Activated CD4-positive, alpha-beta memory T cell treated with anti-CD3 and anti-CD28 coated beads for 36 hours (primary cell): ENCODE measurements at regions of chr10 and their contacts with region 1.

Region 1: DNA sequence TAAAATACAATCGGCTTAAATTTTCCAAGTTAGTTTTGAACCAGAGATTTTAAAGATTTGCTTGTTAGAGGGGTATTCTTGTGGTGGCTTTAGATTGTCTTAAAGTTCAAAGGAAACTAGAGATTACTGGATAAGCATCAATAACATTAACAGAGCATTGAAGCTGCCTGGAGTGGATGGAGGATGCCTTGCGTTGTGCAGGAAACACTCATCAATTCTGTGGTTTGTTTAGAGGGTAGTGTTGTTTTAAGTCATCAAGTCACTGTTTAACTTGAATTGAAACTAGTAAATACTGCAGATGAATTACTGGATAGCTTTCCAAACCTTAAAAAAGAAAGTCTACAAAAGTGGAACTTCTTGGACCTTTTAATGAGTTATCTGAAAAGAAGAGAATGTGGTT is 218.6 kb downstream of the CELF2 start:
- DNase-seq: peak; percentile 61
- H3K4me3 Mint-ChIP-seq: peak overlapping the region; percentile 66
- H3K27ac Mint-ChIP-seq: peak overlapping the region; percentile 93
- H3K4me1 Mint-ChIP-seq: peaks cover 97% of the 10 kb centered on the region
- H3K27me3 Mint-ChIP-seq: no peaks in the 10 kb centered on the region

Region 2: DNA sequence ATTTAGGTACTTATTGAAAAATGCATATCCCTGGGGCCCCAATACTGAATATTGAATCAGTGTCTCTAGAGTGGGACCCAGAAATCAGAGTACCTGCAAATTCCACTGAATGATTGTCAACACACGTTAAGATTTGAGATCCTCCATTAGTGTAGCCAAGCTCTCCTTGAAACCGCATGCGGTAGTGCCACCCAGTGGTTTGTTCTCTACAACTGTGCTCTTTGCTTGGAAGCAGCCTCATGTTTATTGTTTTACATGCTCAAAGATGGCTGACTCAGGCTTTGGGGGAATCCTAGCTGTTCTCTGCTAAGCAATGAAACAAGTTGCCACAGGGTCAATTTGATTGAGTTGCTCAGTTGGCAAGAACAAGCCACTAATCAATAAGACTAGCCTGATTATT is 558.8 kb before region 1 on chr10:
- CTCF ChIA-PET with region 1: no interaction called
- POLR2A ChIA-PET with region 1: no interaction called
- intact Hi-C with region 1: no loop called
- DNase-seq: peak; percentile 64
- H3K4me3 Mint-ChIP-seq: no peak overlapping the region
- H3K27ac Mint-ChIP-seq: no peak overlapping the region
- H3K4me1 Mint-ChIP-seq: no peaks in the 10 kb centered on the region
- H3K27me3 Mint-ChIP-seq: peaks cover 3% of the 10 kb centered on the region

Region 3: GRCh38 chr10:11197266-11197712 is 38.9 kb before region 1 on chr10:
- CTCF ChIA-PET with region 1: interaction called, 3 read pairs
- POLR2A ChIA-PET with region 1: interaction called, 10 read pairs
- intact Hi-C with region 1: no loop called
- DNase-seq: no peak
- H3K4me3 Mint-ChIP-seq: no peak overlapping the region
- H3K27ac Mint-ChIP-seq: peak overlapping the region; percentile 55
- H3K4me1 Mint-ChIP-seq: peaks cover 97% of the 10 kb centered on the region
- H3K27me3 Mint-ChIP-seq: no peaks in the 10 kb centered on the region

Region 4: GRCh38 chr10:11209830-11210181 is 26.4 kb before region 1 on chr10:
- CTCF ChIA-PET with region 1: interaction called, 5 read pairs
- POLR2A ChIA-PET with region 1: interaction called, 17 read pairs
- intact Hi-C with region 1: loop called (anchors 1 kb)
- DNase-seq: no peak
- H3K4me3 Mint-ChIP-seq: peak overlapping the region; percentile 65
- H3K27ac Mint-ChIP-seq: peak overlapping the region; percentile 92
- H3K4me1 Mint-ChIP-seq: peaks cover 97% of the 10 kb centered on the region
- H3K27me3 Mint-ChIP-seq: no peaks in the 10 kb centered on the region

Region 5: GRCh38 chr10:11218395-11218794 is 17.8 kb before region 1 on chr10:
- CTCF ChIA-PET with region 1: interaction called, 11 read pairs
- POLR2A ChIA-PET with region 1: interaction called, 24 read pairs
- intact Hi-C with region 1: loop called (anchors 1 kb)
- DNase-seq: peak; percentile 67
- H3K4me3 Mint-ChIP-seq: peak overlapping the region; percentile 9
- H3K27ac Mint-ChIP-seq: peak overlapping the region; percentile 87
- H3K4me1 Mint-ChIP-seq: peaks cover 74% of the 10 kb centered on the region
- H3K27me3 Mint-ChIP-seq: no peaks in the 10 kb centered on the region

Region 6: DNA sequence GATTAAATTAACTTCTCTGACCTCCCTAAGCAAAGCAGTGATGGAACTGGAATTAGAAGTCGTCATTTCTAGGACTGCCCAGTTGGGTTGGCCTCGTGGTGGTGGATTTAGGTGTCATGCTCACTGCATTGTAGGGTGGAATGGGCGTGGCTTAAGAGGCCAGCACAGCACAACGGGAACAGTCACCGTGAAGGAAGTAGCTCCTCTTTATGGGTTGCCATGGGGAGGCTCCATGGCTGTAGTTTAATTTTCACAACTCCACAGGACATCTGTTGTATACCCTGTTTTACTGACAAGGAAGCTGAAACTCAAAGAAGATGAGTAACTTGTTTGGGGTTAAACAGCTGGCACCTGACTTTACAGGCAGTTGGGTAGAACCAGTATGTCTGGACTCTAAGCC is 10.3 kb before region 1 on chr10:
- CTCF ChIA-PET with region 1: interaction called, 15 read pairs
- POLR2A ChIA-PET with region 1: interaction called, 48 read pairs
- intact Hi-C with region 1: loop called (anchors 1 kb)
- DNase-seq: peak; percentile 88
- H3K4me3 Mint-ChIP-seq: peak overlapping the region; percentile 62
- H3K27ac Mint-ChIP-seq: peak overlapping the region; percentile 97
- H3K4me1 Mint-ChIP-seq: peaks cover 95% of the 10 kb centered on the region
- H3K27me3 Mint-ChIP-seq: no peaks in the 10 kb centered on the region

Region 7: DNA sequence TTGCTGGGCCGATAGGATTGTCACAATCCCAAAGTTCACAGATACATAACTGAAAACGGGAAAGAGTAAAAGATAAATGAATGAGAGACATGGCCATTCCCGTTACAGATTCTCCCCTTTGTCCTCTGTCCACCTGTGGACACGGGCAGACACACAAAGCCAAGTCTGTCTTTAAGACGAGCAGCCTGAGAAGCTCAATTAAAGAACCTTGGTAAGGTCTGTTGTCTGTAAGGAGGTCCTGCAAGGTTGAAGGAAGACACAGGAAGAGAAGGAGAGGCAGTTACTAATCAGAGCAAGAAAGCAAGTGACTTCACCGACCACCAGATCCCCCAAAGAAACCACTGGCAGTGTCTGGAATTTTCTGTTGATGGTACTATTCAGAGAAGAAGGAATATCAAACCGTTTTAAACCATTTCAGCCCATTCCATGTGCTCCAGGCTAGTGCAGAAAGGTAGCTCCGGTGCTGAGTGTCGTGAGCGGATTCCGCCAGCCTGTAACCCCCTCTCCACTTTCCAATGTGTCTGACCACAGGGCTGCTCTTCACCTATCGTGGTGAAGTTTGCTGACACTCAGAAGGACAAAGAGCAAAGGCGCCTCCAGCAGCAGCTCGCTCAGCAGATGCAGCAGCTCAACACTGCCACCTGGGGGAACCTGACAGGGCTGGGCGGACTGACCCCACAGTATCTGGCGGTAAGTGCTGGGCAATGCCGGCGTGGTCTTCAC is 34.1 kb after region 1 on chr10:
- CTCF ChIA-PET with region 1: interaction called, 16 read pairs
- POLR2A ChIA-PET with region 1: interaction called, 8 read pairs
- intact Hi-C with region 1: loop called (anchors 1 kb)
- DNase-seq: peak; percentile 85
- H3K4me3 Mint-ChIP-seq: peak overlapping the region; percentile 25
- H3K27ac Mint-ChIP-seq: peak overlapping the region; percentile 52
- H3K4me1 Mint-ChIP-seq: peaks cover 90% of the 10 kb centered on the region
- H3K27me3 Mint-ChIP-seq: no peaks in the 10 kb centered on the region

Region 8: GRCh38 chr10:11322698-11323097 is 86.5 kb after region 1 on chr10:
- CTCF ChIA-PET with region 1: no interaction called
- POLR2A ChIA-PET with region 1: no interaction called
- intact Hi-C with region 1: loop called (anchors 5 kb)
- DNase-seq: no peak
- H3K4me3 Mint-ChIP-seq: no peak overlapping the region
- H3K27ac Mint-ChIP-seq: peak overlapping the region; percentile 83
- H3K4me1 Mint-ChIP-seq: peaks cover 69% of the 10 kb centered on the region
- H3K27me3 Mint-ChIP-seq: no peaks in the 10 kb centered on the region